MCF 10A (cell line): ENCODE measurements at regions of chr2 and their contacts with region 1.

Region 1: DNA sequence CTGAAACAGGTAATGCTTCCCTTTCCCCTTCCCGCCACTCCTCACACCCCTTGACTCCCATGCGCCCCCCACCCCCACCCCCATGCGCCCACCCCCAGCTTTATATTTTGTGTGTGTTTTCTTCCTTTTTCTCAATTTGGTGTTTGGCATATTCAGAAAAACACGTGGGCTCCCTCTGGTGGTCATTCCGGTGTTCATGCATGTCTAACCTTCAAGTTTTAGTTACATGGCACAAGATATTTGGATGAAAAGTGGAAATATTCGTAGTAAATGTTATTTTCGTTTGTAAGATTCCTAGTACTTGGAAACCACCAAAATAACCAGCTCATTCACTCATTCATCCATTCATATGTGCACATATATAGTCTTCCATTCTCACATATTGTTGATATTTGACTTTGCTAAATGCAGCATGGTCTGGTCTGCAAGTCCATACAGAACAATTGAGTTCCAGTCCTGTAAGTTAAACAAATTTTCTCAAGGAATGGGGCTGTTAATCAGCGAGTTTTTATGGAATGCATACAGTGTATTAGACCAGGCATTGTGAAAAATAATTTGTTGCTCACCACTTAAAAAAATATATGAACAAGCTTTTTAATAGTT is 143.6 kb upstream of the MAP3K20 start:
- DNase-seq: peak; percentile 72
- H3K4me3 Mint-ChIP-seq: no peak overlapping the region
- H3K27ac Mint-ChIP-seq: no peak overlapping the region
- H3K4me1 Mint-ChIP-seq: peaks cover 41% of the 10 kb centered on the region
- H3K27me3 Mint-ChIP-seq: no peaks in the 10 kb centered on the region
- CTCF ChIP-seq: peak; percentile 54

Region 2: GRCh38 chr2:172813314-172813888 is 118.6 kb before region 1 on chr2:
- CTCF ChIA-PET with region 1: interaction called, 141 read pairs
- POLR2A ChIA-PET with region 1: interaction called, 11 read pairs
- intact Hi-C with region 1: loop called (anchors 1 kb)
- DNase-seq: peak; percentile 38
- H3K4me3 Mint-ChIP-seq: no peak overlapping the region
- H3K27ac Mint-ChIP-seq: no peak overlapping the region
- H3K4me1 Mint-ChIP-seq: no peaks in the 10 kb centered on the region
- H3K27me3 Mint-ChIP-seq: no peaks in the 10 kb centered on the region
- CTCF ChIP-seq: peak; percentile 43

Region 3: DNA sequence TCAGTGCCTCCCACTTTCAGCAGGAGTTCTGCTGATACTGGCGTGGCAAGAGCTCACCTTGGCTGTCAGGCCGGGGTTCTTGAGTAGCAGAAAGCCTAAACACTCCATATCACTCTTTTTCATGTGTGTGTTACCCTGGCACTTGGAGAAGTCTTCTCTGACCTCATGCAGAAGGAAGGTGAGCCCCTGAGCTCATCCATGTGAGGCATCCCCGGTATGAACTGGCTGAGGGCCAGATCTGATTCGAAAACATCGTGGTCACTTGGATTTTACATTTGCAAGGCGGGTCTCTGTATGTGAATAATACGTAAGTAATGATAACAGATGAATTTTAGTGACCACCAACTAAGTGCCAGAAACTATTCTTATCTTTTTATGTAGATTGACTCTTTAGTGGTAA is 102.8 kb before region 1 on chr2:
- CTCF ChIA-PET with region 1: interaction called, 19 read pairs
- POLR2A ChIA-PET with region 1: no interaction called
- intact Hi-C with region 1: no loop called
- DNase-seq: no peak
- H3K4me3 Mint-ChIP-seq: no peak overlapping the region
- H3K27ac Mint-ChIP-seq: no peak overlapping the region
- H3K4me1 Mint-ChIP-seq: peaks cover 5% of the 10 kb centered on the region
- H3K27me3 Mint-ChIP-seq: no peaks in the 10 kb centered on the region
- CTCF ChIP-seq: no peak

Region 4: GRCh38 chr2:172869861-172870260 is 62.2 kb before region 1 on chr2:
- CTCF ChIA-PET with region 1: interaction called, 20 read pairs
- POLR2A ChIA-PET with region 1: no interaction called
- intact Hi-C with region 1: no loop called
- DNase-seq: no peak
- H3K4me3 Mint-ChIP-seq: no peak overlapping the region
- H3K27ac Mint-ChIP-seq: no peak overlapping the region
- H3K4me1 Mint-ChIP-seq: no peaks in the 10 kb centered on the region
- H3K27me3 Mint-ChIP-seq: no peaks in the 10 kb centered on the region
- CTCF ChIP-seq: no peak

Region 5: GRCh38 chr2:172921532-172922236 is 10.3 kb before region 1 on chr2:
- CTCF ChIA-PET with region 1: interaction called, 34 read pairs
- POLR2A ChIA-PET with region 1: interaction called, 3 read pairs
- intact Hi-C with region 1: no loop called
- DNase-seq: peak; percentile 29
- H3K4me3 Mint-ChIP-seq: no peak overlapping the region
- H3K27ac Mint-ChIP-seq: no peak overlapping the region
- H3K4me1 Mint-ChIP-seq: no peaks in the 10 kb centered on the region
- H3K27me3 Mint-ChIP-seq: peaks cover 11% of the 10 kb centered on the region
- CTCF ChIP-seq: no peak